HepG2 (cell line): ENCODE measurements at regions of chr6 and their contacts with region 1.

Region 1: GRCh38 chr6:28981833-28982475 is 23.2 kb downstream of the ZNF311 start:
- DNase-seq: peak; percentile 98
- ATAC-seq: peak; percentile 26
- H3K4me3 ChIP-seq: peak overlapping the region; percentile 71 to 97 (median 83)
- H3K27ac ChIP-seq: peak overlapping the region; percentile 98
- H3K4me1 ChIP-seq: peaks cover 62% of the 10 kb centered on the region
- H3K27me3 ChIP-seq: no peaks in the 10 kb centered on the region; a peak in 2 of 5 replicates
- CTCF ChIP-seq: peak; percentile 63
- EP300 ChIP-seq: 0 out of 4 replicates have a peak, but pooled peaks of 1 of the 2 experiments have one; percentile 13
- POLR2A ChIP-seq: no peak
- RAD21 ChIP-seq: peak; percentile 27; the same call in 1 of the 2 replicates

Region 2: GRCh38 chr6:28895134-28895812 is 86.7 kb before region 1 on chr6:
- CTCF ChIA-PET with region 1: no interaction called
- POLR2A ChIA-PET with region 1: interaction called, 13 read pairs
- in situ Hi-C with region 1: no loop called
- intact Hi-C with region 1: loop called (anchors 1 kb)
- DNase-seq: peak; percentile 98
- ATAC-seq: peak; percentile 86
- H3K4me3 ChIP-seq: peak overlapping the region; percentile 82 to 97 (median 86)
- H3K27ac ChIP-seq: peak overlapping the region; percentile 93
- H3K4me1 ChIP-seq: peaks cover 40% of the 10 kb centered on the region
- H3K27me3 ChIP-seq: no peaks in the 10 kb centered on the region; a peak in 1 of 5 replicates
- CTCF ChIP-seq: no peak
- EP300 ChIP-seq: no peak
- POLR2A ChIP-seq: peak; percentile 90 to 95
- RAD21 ChIP-seq: no peak

Region 3: GRCh38 chr6:28947831-28948270 is 34.1 kb before region 1 on chr6:
- CTCF ChIA-PET with region 1: no interaction called
- POLR2A ChIA-PET with region 1: interaction called, 13 read pairs
- in situ Hi-C with region 1: loop called (anchors 5 kb)
- intact Hi-C with region 1: no loop called
- DNase-seq: peak; percentile 94
- ATAC-seq: peak; percentile 86
- H3K4me3 ChIP-seq: peak overlapping the region in 2 of 3 experiments; percentile 16 to 23; a peak in 2 of 6 replicates
- H3K27ac ChIP-seq: peak overlapping the region; percentile 54
- H3K4me1 ChIP-seq: peaks cover 73% of the 10 kb centered on the region
- H3K27me3 ChIP-seq: peaks cover 0 to 3% of the 10 kb centered on the region in 2 experiments; a peak in 1 of 5 replicates
- CTCF ChIP-seq: no peak
- EP300 ChIP-seq: peak in 1 of 2 experiments; percentile 26; a peak in 2 of 4 replicates
- POLR2A ChIP-seq: no peak
- RAD21 ChIP-seq: no peak

Region 4: DNA sequence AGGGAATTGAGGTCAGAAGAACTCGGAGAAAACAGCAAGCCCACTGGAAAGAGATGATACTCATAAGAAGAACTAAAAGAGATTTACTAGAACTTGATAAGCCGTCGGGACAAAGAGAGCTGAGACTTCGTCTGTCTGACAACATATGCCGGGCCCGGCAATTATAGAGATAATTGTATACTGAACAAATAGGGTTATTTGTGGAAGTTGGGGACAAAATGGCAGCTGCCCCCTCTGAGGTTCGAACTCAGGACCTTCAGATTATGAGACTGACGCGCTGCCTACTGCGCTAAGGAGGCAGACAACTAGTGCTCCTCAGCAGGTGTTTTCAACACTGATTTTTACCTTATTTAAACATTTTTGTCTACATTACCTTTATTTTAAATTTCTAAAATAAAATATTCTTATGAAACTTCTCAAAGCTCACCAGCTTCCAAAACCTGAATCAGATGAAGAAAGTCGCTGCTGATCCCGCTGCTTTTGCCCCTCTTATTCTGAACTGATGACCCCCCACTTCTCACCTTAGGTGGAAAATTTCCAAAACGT is 28.8 kb before region 1 on chr6:
- CTCF ChIA-PET with region 1: no interaction called
- POLR2A ChIA-PET with region 1: interaction called, 13 read pairs
- in situ Hi-C with region 1: no loop called
- intact Hi-C with region 1: loop called (anchors 2 kb)
- DNase-seq: peak; percentile 74
- ATAC-seq: peak; percentile 30
- H3K4me3 ChIP-seq: peak overlapping the region; percentile 76 to 96 (median 79)
- H3K27ac ChIP-seq: peak overlapping the region; percentile 68
- H3K4me1 ChIP-seq: peaks cover 48% of the 10 kb centered on the region
- H3K27me3 ChIP-seq: peaks cover 0 to 6% of the 10 kb centered on the region in 2 experiments; a peak in 1 of 5 replicates
- CTCF ChIP-seq: 0 out of 2 replicates have a peak, but pooled peaks have one; percentile 6
- EP300 ChIP-seq: 0 out of 4 replicates have a peak, but pooled peaks of 1 of the 2 experiments have one; percentile 14
- POLR2A ChIP-seq: no peak
- RAD21 ChIP-seq: peak; percentile 17; the same call in 1 of the 2 replicates

Region 5: GRCh38 chr6:29016559-29017427 is 34.8 kb after region 1 on chr6:
- CTCF ChIA-PET with region 1: interaction called, 13 read pairs
- POLR2A ChIA-PET with region 1: interaction called, 14 read pairs
- in situ Hi-C with region 1: no loop called
- intact Hi-C with region 1: loop called (anchors 1 kb)
- DNase-seq: peak; percentile 80
- ATAC-seq: peak; percentile 90
- H3K4me3 ChIP-seq: peak overlapping the region; percentile 67 to 82 (median 70)
- H3K27ac ChIP-seq: peak overlapping the region; percentile 15
- H3K4me1 ChIP-seq: peaks cover 22% of the 10 kb centered on the region
- H3K27me3 ChIP-seq: no peaks in the 10 kb centered on the region; a peak in 2 of 5 replicates
- CTCF ChIP-seq: peak; percentile 82
- EP300 ChIP-seq: no peak
- POLR2A ChIP-seq: no peak
- RAD21 ChIP-seq: peak; percentile 81